Adrenal gland (tissue), 19 donors: ENCODE measurements at regions of chr11 and their contacts with region 1.

Region 1: DNA sequence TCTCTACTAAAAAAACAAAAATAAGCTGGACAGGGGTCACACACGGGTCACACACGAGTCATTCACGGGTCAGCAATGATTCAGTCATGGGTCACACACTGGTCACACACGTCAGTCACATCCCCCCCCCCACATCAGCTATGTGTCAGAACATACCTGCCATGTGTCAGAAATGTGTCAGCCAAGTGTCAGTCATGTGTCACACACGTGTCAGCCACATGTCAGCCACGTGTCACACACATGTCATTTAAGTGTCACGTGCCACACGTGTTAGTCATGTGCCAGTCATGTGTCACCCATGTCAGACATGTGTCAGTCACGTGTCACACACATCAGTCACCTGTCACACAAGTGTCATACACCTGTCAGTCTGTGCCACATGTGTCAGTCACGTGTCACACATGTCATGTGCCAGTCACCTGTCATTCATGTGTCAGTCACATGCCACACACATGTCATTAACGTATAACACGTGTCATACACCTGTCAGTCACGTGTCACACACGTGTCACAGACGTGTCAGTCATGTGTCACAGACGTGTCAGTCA is 28.7 kb upstream of the MMP20 start:
- DNase-seq: no peak
- H3K4me3 ChIP-seq: no peak overlapping the region
- H3K27ac ChIP-seq: no peak overlapping the region
- H3K4me1 ChIP-seq: no peaks in the 10 kb centered on the region
- H3K27me3 ChIP-seq: peaks cover 4% of the 10 kb centered on the region
- CTCF ChIP-seq: no peak
- POLR2A ChIP-seq: no peak

Region 2: DNA sequence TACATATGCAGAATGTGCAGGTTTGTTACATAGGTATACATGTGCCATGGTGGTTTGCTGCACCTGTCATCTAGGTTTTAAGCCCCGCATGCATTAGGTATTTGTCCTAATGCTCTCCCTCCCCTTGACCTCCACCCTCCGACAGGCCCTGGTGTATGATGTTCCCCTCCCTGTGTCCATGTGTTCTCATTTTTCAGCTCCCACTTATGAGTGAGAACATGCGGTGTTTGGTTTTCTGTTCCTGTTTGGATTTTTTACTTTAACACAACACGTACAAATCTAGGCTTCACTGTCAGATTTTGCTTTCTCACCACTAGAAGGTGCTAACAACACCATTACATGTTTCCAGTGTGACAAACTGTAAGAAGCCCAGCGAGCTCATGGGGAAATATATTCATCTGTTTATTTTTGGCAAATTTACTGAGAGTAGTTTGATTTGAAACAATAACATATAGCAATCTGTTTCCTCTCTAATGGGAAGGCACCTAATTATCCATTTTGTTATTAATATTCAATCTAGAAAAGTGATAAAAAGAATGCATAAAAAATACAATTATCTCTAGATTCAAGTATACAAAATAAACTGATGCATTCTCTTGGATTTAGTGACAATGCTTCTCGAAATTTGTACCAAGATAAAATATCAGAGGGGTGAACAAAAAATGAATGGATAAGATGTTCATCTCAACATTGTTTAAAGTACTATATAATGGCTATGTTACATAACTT is 359.8 kb before region 1 on chr11:
- intact Hi-C with region 1: loop called in 1 of 2 experiments (anchors 10 kb)
- DNase-seq: peak in 2 of 7 donors; percentile 11 to 12
- H3K4me3 ChIP-seq: no peak overlapping the region
- H3K27ac ChIP-seq: no peak overlapping the region
- H3K4me1 ChIP-seq: peaks cover 0 to 2% of the 10 kb centered on the region in 2 donors
- H3K27me3 ChIP-seq: no peaks in the 10 kb centered on the region
- CTCF ChIP-seq: peak; percentile 23 to 54 (median 49)
- POLR2A ChIP-seq: no peak

Region 3: DNA sequence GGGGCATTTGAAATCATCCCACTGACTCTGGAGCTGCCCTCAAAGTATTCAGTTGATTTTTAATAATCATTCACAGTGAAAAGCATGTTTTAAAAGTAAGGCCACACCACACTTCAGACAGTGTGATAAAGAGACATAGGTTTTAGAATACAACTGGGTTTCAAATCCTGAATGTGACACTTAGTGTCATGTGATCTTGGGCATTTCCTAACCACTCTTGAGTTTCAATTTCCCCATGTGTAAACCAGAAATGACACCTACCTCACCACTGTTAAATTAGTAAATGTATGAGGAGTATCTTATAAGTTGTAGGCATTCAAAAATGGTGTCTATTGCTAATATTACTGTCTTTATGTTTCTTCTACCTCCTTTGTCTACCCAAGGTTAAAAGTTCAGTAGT is 206.6 kb before region 1 on chr11:
- intact Hi-C with region 1: no loop called
- DNase-seq: no peak
- H3K4me3 ChIP-seq: no peak overlapping the region
- H3K27ac ChIP-seq: no peak overlapping the region
- H3K4me1 ChIP-seq: peaks cover 28 to 34% of the 10 kb centered on the region in 2 donors
- H3K27me3 ChIP-seq: no peaks in the 10 kb centered on the region
- CTCF ChIP-seq: no peak
- POLR2A ChIP-seq: no peak